ENCODE measurements at regions of chr13 and their contacts with region 1.

Region 1: GRCh38 chr13:46211483-46212351 is at the start of gene LRRC63:
- DNase-seq: peak; percentile 85
- H3K4me3 Mint-ChIP-seq: peak within 1 kb of the TSS; percentile 84
- H3K27ac Mint-ChIP-seq: peak within 1 kb of the TSS; percentile 87
- H3K4me1 Mint-ChIP-seq: peaks cover 26% of the 10 kb centered on the region
- H3K27me3 Mint-ChIP-seq: peaks cover 1% of the 10 kb centered on the region
- total RNA-seq, gene LRRC63: 0.13 and 0.17 TPM in 2 replicates

Region 2: DNA sequence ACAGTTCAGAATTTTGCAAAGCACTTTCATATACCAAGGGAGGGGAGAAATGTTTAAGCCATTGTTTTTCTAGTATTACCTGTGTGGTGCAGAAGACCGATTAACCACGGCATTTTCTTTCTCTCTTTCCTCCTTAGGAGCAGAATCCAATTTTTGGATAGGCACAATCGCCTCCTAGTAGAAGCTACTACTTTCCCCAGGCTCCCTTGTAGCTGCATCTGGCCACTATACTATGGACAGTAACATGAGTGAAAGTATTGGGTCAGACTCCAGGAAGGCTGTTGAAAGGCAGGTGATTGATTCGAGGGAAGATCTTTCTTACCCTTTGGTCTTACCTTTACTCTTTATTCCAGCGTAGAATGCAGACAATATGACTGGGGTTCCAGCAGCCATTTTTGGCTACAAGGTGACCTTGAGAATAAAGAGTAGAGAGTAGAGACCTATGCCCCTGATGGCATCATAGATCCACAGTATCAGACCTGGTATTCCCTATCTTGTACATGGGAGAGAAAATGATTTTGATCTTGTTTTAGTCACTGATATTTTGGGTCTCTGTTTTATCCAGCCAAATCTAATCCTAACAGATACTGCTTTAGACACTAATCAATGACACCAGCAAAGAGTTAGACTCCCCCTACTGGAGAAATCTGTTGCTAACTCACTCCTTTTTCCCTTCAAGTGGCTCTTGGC is 77.0 kb after region 1 on chr13:
- intact Hi-C with region 1: loop called (anchors 2 kb)
- DNase-seq: no peak
- H3K4me3 Mint-ChIP-seq: no peak overlapping the region
- H3K27ac Mint-ChIP-seq: no peak overlapping the region
- H3K4me1 Mint-ChIP-seq: peaks cover 26% of the 10 kb centered on the region
- H3K27me3 Mint-ChIP-seq: peaks cover 5% of the 10 kb centered on the region

Region 3: DNA sequence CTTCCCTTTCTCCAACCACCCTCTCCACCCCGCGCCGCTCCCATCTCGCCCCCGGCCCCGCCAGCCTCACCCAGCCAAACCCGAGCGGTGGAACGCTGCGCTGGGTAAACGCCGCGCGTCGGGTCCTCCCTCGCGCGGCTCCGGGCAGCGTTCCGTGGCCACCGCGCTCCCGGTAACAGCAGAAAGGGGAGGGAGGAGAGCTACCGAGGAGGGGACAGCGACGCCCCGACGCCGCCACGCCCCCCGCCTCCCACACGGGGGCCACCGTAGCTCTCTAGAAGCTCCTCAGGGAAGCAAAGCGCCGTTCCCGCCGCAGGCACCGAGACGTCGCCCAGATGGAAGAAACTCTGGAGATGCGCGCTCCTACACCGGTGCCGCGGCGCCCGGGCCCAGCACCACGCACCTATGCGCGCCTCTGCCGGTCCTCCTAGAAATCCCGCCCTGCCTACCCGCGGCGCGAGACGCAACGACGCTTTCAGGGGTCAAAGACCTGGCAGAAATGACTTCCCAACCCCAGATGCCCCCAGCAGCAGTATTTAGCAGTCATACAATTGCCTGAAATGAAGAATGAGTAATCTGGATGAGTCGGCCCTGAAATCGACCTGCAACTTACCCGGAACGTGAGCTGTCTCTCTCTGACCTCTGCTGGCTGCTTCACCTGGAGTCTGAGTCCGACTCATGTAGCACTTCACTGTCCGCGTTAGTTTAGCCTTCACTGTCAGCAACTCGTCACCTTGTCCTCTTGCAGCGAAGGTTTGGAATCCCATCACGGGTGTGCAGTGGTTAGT is 175.5 kb after region 1 on chr13 and contains the start of gene RUBCNL:
- intact Hi-C with region 1: no loop called
- DNase-seq: peak; percentile 13
- H3K4me3 Mint-ChIP-seq: peak within 1 kb of the TSS; percentile 87
- H3K27ac Mint-ChIP-seq: peak within 1 kb of the TSS; percentile 15
- H3K4me1 Mint-ChIP-seq: peaks cover 40% of the 10 kb centered on the region
- H3K27me3 Mint-ChIP-seq: peaks cover 23% of the 10 kb centered on the region
- total RNA-seq, gene RUBCNL: 1.2 and 2.8 TPM in 2 replicates